ENCODE measurements at regions of chr11 and their contacts with region 1.

Region 1: DNA sequence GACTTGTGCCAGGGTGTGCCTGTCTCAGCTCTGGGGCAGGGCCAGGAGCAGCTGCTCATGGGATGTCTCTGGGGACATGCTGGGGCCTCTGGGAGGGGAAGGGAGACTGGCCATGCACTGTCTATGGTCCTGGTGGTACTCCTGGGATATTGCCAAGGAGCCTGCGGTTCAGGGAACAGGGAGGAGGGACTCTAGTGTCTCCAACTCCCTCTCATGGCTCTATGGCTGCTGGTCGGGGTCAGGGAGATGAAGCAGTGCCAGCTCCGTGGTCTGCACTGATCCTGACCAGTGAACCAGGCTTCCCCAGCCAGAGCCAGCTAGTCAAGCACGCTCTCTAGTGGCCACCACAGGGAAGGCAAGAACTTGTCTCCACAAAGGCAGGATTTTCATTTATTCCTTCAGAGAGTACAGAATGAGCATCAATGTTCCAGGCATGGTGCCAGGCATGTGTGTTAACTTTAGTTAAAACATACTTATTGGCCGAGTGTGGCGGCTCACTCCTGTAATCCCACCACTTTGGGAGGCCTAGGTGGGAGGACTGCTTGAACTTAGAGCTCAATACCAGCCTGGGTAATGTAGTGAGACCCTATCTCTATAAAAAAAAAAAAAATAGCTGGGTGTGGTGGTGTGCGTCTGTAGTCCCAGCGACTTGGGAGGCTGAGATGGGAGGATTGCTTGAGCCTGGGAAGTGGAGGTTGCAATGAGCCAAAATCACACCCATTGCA is 2.5 kb upstream of the BEST1 start:
- DNase-seq: peak; percentile 77 to 95 (median 88)
- H3K4me3 ChIP-seq: no peak overlapping the region
- H3K27ac ChIP-seq: peak overlapping the region in 58 of 59 donors; percentile 52 to 100 (median 97)
- H3K27me3 ChIP-seq: no peaks in the 10 kb centered on the region
- CTCF ChIP-seq: peak; percentile 84 to 97 (median 94)

Region 2: DNA sequence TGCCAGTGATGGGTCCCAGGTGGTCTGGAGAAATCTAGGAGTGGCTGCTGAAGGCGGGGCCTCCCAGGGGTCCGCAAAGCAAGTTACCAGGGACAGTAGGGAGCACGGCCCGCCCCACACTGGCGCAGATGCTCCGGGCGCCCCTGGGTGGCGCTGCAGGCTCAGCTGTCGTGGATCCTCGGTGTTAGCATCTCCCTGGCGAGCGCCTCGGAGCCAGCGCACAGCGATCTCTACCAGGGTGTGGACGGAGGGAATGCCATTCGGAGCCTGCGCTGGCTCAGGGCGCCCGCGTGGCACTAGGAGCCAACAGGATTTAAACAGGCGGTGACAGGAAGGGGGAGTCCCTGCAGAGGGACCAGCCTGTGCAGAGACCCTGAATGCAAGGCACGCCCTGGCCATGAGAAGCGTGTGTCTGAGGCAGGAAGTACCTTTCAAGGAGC is 76.5 kb before region 1 on chr11:
- intact Hi-C with region 1: loop called in 1 of 2 experiments (anchors 1 kb)
- DNase-seq: peak; percentile 78 to 90 (median 88)
- H3K4me3 ChIP-seq: peak overlapping the region in 52 of 59 donors; percentile 5 to 56 (median 38)
- H3K27ac ChIP-seq: peak overlapping the region in 36 of 59 donors; percentile 8 to 82 (median 48)
- H3K27me3 ChIP-seq: no peaks in the 10 kb centered on the region
- CTCF ChIP-seq: peak; percentile 77 to 98 (median 94)

Region 3: DNA sequence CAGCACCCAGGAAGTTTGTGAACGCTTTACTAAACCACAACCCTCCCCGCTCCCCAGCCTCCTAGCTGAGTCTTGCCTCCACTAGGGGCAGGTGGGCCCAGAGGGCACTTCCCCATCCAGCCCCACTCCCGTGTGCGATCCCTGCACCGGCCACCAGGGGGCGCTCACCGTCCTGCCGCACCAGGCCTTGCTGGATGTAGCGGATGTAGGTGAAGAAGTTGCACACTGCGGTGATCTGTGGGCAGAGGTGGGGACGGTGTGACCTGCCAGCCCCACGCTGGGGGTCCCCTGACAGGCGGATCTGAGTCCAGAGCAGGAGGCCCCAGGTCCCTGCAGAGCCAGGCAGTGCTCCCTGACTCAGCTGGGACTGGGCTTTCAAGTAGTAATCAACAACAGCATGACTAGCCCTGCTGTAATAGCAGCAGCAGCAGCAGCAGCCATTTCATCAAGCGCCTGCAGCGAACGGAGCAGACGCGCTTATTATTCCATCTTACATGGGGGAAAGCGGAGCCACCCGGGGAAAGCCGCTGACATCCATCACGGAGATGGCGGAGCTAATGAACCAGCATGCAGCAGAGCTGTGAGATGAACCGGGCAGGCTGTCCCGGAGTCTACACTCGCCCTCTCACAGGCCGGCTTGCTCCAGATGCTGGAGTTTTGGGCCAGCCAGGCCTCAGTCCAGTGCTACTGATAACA is 48.4 kb before region 1 on chr11:
- intact Hi-C with region 1: loop called (anchors 1 to 2 kb)
- DNase-seq: peak; percentile 53 to 85 (median 72)
- H3K4me3 ChIP-seq: no peak overlapping the region
- H3K27ac ChIP-seq: peak overlapping the region in 50 of 59 donors; percentile 1 to 84 (median 56)
- H3K27me3 ChIP-seq: no peaks in the 10 kb centered on the region
- CTCF ChIP-seq: peak; percentile 99 to 100 (median 100)

Region 4: GRCh38 chr11:61967116-61967923 is 19.7 kb after region 1 on chr11 and contains the start of gene FTH1:
- intact Hi-C with region 1: loop called in 1 of 2 experiments (anchors 1 kb)
- DNase-seq: peak; percentile 86 to 96 (median 94)
- H3K4me3 ChIP-seq: peak within 1 kb of the TSS; percentile 56 to 100 (median 96)
- H3K27ac ChIP-seq: peak within 1 kb of the TSS; percentile 92 to 100 (median 99)
- H3K27me3 ChIP-seq: no peaks in the 10 kb centered on the region
- CTCF ChIP-seq: peak in 24 of 56 donors; percentile 8 to 49 (median 21)
- total RNA-seq, gene FTH1: 2,016 to 5,225 (median 3,057) TPM

Region 5: GRCh38 chr11:62081378-62082291 is 134.0 kb after region 1 on chr11:
- intact Hi-C with region 1: loop called in 1 of 2 experiments (anchors 5 kb)
- DNase-seq: peak; percentile 78 to 92 (median 86)
- H3K4me3 ChIP-seq: peak overlapping the region in 52 of 59 donors; percentile 1 to 59 (median 40)
- H3K27ac ChIP-seq: peak overlapping the region in 25 of 59 donors; percentile 12 to 78 (median 38)
- H3K27me3 ChIP-seq: no peaks in the 10 kb centered on the region
- CTCF ChIP-seq: peak; percentile 76 to 100 (median 95)